ENCODE measurements at regions of chr1 and their contacts with region 1.

Region 1: GRCh38 chr1:167059045-167059808 is 30.9 kb downstream of the GPA33 start:
- DNase-seq: peak; percentile 84
- H3K4me3 Mint-ChIP-seq: no peak overlapping the region
- H3K27ac Mint-ChIP-seq: no peak overlapping the region
- H3K4me1 Mint-ChIP-seq: peaks cover 6% of the 10 kb centered on the region
- H3K27me3 Mint-ChIP-seq: no peaks in the 10 kb centered on the region

Region 2: GRCh38 chr1:166479052-166479631 is 580.1 kb before region 1 on chr1:
- CTCF ChIA-PET with region 1: interaction called, 4 read pairs
- POLR2A ChIA-PET with region 1: no interaction called
- intact Hi-C with region 1: loop called (anchors 2 kb)
- DNase-seq: peak; percentile 68
- H3K4me3 Mint-ChIP-seq: no peak overlapping the region
- H3K27ac Mint-ChIP-seq: no peak overlapping the region
- H3K4me1 Mint-ChIP-seq: no peaks in the 10 kb centered on the region
- H3K27me3 Mint-ChIP-seq: no peaks in the 10 kb centered on the region

Region 3: GRCh38 chr1:166875734-166876539 is 183.3 kb before region 1 on chr1 and contains the start of gene TADA1:
- CTCF ChIA-PET with region 1: interaction called, 18 read pairs
- POLR2A ChIA-PET with region 1: no interaction called
- intact Hi-C with region 1: loop called (anchors 2 kb)
- DNase-seq: peak; percentile 100
- H3K4me3 Mint-ChIP-seq: peak within 1 kb of the TSS; percentile 96
- H3K27ac Mint-ChIP-seq: peak within 1 kb of the TSS; percentile 97
- H3K4me1 Mint-ChIP-seq: peaks cover 47% of the 10 kb centered on the region
- H3K27me3 Mint-ChIP-seq: no peaks in the 10 kb centered on the region
- total RNA-seq, gene TADA1: 16.9 to 18.3 TPM

Region 4: GRCh38 chr1:166920561-166921475 is 138.4 kb before region 1 on chr1:
- CTCF ChIA-PET with region 1: interaction called, 918 read pairs
- POLR2A ChIA-PET with region 1: no interaction called
- intact Hi-C with region 1: no loop called
- DNase-seq: no peak
- H3K4me3 Mint-ChIP-seq: no peak overlapping the region
- H3K27ac Mint-ChIP-seq: no peak overlapping the region
- H3K4me1 Mint-ChIP-seq: no peaks in the 10 kb centered on the region
- H3K27me3 Mint-ChIP-seq: peaks cover 27% of the 10 kb centered on the region

Region 5: DNA sequence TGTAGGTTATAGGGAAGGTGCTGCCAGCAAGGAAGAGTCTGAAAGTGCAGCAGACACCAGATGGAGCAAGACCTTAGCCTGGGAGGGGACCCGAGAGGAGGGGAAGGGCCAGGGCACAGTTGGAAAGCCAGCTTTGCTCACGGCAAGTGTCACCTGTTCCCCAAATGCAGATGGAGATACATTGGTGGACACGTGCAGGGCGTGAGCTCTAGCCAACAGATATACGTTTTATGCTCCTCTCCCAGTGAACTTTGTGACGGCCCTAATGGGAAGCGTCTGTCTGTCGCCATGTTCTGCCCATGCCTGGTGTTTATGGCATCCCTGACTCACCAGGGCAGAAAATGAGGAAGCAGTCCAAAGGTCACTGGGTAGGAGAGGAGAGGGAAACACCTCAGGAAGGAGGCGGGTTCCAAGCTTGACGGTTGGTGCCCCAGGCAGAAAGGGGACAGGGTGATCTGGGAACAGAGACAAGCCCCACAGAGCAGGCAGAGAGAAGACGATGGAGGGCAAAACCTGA is 23.3 kb after region 1 on chr1:
- CTCF ChIA-PET with region 1: interaction called, 15 read pairs
- POLR2A ChIA-PET with region 1: interaction called, 3 read pairs
- intact Hi-C with region 1: no loop called
- DNase-seq: no peak
- H3K4me3 Mint-ChIP-seq: no peak overlapping the region
- H3K27ac Mint-ChIP-seq: no peak overlapping the region
- H3K4me1 Mint-ChIP-seq: peaks cover 4% of the 10 kb centered on the region
- H3K27me3 Mint-ChIP-seq: no peaks in the 10 kb centered on the region